Heart left ventricle (tissue), 16 donors: ENCODE measurements at regions of chr2 and their contacts with region 1.

Region 1: GRCh38 chr2:3461801-3462492 is 57.4 kb downstream of the ADI1 start:
- DNase-seq: peak in 2 of 5 donors; percentile 24 to 55
- ATAC-seq: no peak
- H3K4me3 ChIP-seq: peak overlapping the region in 1 of 12 donors; percentile 14
- H3K27ac ChIP-seq: peak overlapping the region in 7 of 12 donors; percentile 10 to 87 (median 80)
- H3K4me1 ChIP-seq: peaks cover 0 to 62% (median 42%) of the 10 kb centered on the region in 12 donors
- H3K27me3 ChIP-seq: no peaks in the 10 kb centered on the region
- CTCF ChIP-seq: peak; percentile 86 to 97 (median 96)
- POLR2A ChIP-seq: no peak

Region 2: GRCh38 chr2:3379647-3380534 is 82.1 kb before region 1 on chr2 and contains the start of gene TRAPPC12:
- intact Hi-C with region 1: loop called in 4 of 10 experiments (anchors 2 to 10 kb)
- DNase-seq: peak; percentile 90 to 95 (median 92)
- ATAC-seq: peak; percentile 83 to 92 (median 91)
- H3K4me3 ChIP-seq: peak within 1 kb of the TSS; percentile 51 to 92 (median 84)
- H3K27ac ChIP-seq: peak within 1 kb of the TSS; percentile 42 to 96 (median 92)
- H3K4me1 ChIP-seq: peaks cover 0 to 41% (median 32%) of the 10 kb centered on the region in 12 donors
- H3K27me3 ChIP-seq: no peaks in the 10 kb centered on the region
- CTCF ChIP-seq: peak in 9 of 12 donors; percentile 23 to 66 (median 37)
- POLR2A ChIP-seq: peak in 1 of 2 donors; percentile 85
- total RNA-seq, gene TRAPPC12: 72.3 to 111 (median 88.2) TPM

Region 3: DNA sequence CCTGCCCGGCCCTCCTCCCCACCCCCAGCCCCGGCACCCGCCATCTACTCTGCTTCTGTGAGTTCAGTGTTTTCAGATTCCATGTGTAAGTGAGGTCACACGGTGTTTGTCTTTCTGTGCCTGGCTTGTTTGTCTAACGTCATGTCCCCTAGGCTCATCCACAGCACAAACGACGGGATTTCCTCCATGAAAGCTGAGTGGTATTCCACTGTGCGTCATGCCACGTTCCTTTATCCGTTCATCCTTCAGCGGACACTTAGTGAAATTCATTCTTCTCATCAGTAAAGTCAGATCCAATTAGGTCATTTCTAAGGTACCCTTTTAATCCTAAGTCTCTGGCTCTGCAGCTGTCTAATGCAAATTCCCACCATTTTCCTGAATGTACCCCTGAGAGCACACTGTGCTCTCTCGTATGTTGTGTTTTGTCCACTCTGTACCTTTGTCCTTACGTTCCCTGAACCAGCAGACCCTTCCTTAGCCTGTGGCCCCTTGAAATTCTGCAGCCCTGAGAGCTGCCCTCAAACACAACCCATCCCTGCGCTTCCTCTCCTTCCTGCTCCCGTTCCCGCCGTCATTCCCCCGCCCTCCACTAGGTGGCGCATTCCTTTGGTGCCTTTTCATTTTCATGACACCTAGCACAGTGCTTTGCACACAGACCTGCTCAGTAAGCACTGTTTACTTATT is 38.3 kb before region 1 on chr2:
- intact Hi-C with region 1: loop called in 9 of 10 experiments (anchors 1 to 5 kb)
- DNase-seq: peak; percentile 47 to 83 (median 68)
- ATAC-seq: peak in 3 of 4 donors; percentile 51 to 65 (median 57)
- H3K4me3 ChIP-seq: no peak overlapping the region
- H3K27ac ChIP-seq: no peak overlapping the region
- H3K4me1 ChIP-seq: peaks cover 0 to 11% (median 0%) of the 10 kb centered on the region in 12 donors
- H3K27me3 ChIP-seq: no peaks in the 10 kb centered on the region
- CTCF ChIP-seq: peak; percentile 91 to 99 (median 98)
- POLR2A ChIP-seq: no peak

Region 4: GRCh38 chr2:3434654-3435053 is 27.3 kb before region 1 on chr2:
- intact Hi-C with region 1: loop called in 1 of 10 experiments (anchors 1 kb)
- DNase-seq: no peak
- ATAC-seq: no peak
- H3K4me3 ChIP-seq: no peak overlapping the region
- H3K27ac ChIP-seq: no peak overlapping the region
- H3K4me1 ChIP-seq: peaks cover 0 to 13% (median 2%) of the 10 kb centered on the region in 12 donors
- H3K27me3 ChIP-seq: no peaks in the 10 kb centered on the region
- CTCF ChIP-seq: no peak
- POLR2A ChIP-seq: no peak

Region 5: GRCh38 chr2:3536682-3537632 is 75.0 kb after region 1 on chr2:
- intact Hi-C with region 1: loop called in 1 of 10 experiments (anchors 5 kb)
- DNase-seq: peak in 3 of 5 donors; percentile 55 to 73 (median 61)
- ATAC-seq: peak; percentile 32 to 56 (median 52)
- H3K4me3 ChIP-seq: peak overlapping the region; percentile 15 to 65 (median 47)
- H3K27ac ChIP-seq: peak overlapping the region; percentile 85 to 97 (median 92)
- H3K4me1 ChIP-seq: peaks cover 2 to 33% (median 18%) of the 10 kb centered on the region in 12 donors
- H3K27me3 ChIP-seq: no peaks in the 10 kb centered on the region
- CTCF ChIP-seq: peak in 11 of 12 donors; percentile 9 to 66 (median 34)
- POLR2A ChIP-seq: no peak

Region 6: GRCh38 chr2:3575534-3576262 is 113.8 kb after region 1 on chr2:
- intact Hi-C with region 1: no loop called
- DNase-seq: no peak
- ATAC-seq: peak in 3 of 4 donors; percentile 1 to 42 (median 41)
- H3K4me3 ChIP-seq: peak overlapping the region; percentile 61 to 96 (median 84)
- H3K27ac ChIP-seq: peak overlapping the region; percentile 53 to 96 (median 84)
- H3K4me1 ChIP-seq: peaks cover 0 to 46% (median 32%) of the 10 kb centered on the region in 12 donors
- H3K27me3 ChIP-seq: no peaks in the 10 kb centered on the region
- CTCF ChIP-seq: no peak
- POLR2A ChIP-seq: no peak